CD4-positive, alpha-beta T cell (primary cell): ENCODE measurements at regions of chr2 and their contacts with region 1.

Region 1: GRCh38 chr2:230007931-230008707 is 60.6 kb downstream of the SLC16A14 start:
- DNase-seq: peak; percentile 67 to 86 (median 78)
- ATAC-seq: peak; percentile 72
- H3K4me3 ChIP-seq: no peak overlapping the region
- H3K4me3 Mint-ChIP-seq: peak overlapping the region; percentile 7
- H3K27ac ChIP-seq: no peak overlapping the region
- H3K27ac Mint-ChIP-seq: no peak overlapping the region
- H3K4me1 ChIP-seq: no peaks in the 10 kb centered on the region
- H3K4me1 Mint-ChIP-seq: no peaks in the 10 kb centered on the region
- H3K27me3 ChIP-seq: no peaks in the 10 kb centered on the region
- H3K27me3 Mint-ChIP-seq: no peaks in the 10 kb centered on the region
- CTCF ChIP-seq: peak; percentile 93

Region 2: DNA sequence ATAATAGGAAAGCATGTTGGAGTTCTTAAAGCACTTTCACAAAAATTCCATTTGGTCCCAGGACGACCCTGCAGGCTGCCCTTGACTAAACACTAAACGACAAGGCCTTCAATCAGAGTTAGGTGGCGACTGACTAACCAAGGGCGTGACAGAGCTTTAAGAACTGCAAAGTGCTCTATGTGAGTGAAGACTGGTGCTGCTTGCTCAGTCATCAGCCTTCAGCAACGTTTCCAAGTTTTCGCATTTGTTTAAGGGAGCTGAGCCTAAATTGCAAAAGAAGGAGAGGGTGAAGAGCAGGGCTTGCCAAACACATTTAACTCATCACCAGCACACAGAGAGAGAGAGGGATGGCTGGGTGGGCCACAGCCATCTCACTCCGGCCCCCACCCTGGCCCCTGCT is 532.3 kb before region 1 on chr2:
- CTCF ChIA-PET with region 1: no interaction called
- POLR2A ChIA-PET with region 1: no interaction called
- intact Hi-C with region 1: no loop called
- DNase-seq: no peak
- ATAC-seq: no peak
- H3K4me3 ChIP-seq: no peak overlapping the region
- H3K4me3 Mint-ChIP-seq: no peak overlapping the region
- H3K27ac ChIP-seq: no peak overlapping the region
- H3K27ac Mint-ChIP-seq: no peak overlapping the region
- H3K4me1 ChIP-seq: no peaks in the 10 kb centered on the region
- H3K4me1 Mint-ChIP-seq: no peaks in the 10 kb centered on the region
- H3K27me3 ChIP-seq: no peaks in the 10 kb centered on the region
- H3K27me3 Mint-ChIP-seq: peaks cover 9% of the 10 kb centered on the region
- CTCF ChIP-seq: no peak

Region 3: GRCh38 chr2:229943770-229944449 is 64.2 kb before region 1 on chr2:
- CTCF ChIA-PET with region 1: no interaction called
- POLR2A ChIA-PET with region 1: no interaction called
- intact Hi-C with region 1: no loop called
- DNase-seq: no peak
- ATAC-seq: no peak
- H3K4me3 ChIP-seq: no peak overlapping the region
- H3K4me3 Mint-ChIP-seq: no peak overlapping the region
- H3K27ac ChIP-seq: no peak overlapping the region
- H3K27ac Mint-ChIP-seq: no peak overlapping the region
- H3K4me1 ChIP-seq: no peaks in the 10 kb centered on the region
- H3K4me1 Mint-ChIP-seq: no peaks in the 10 kb centered on the region
- H3K27me3 ChIP-seq: no peaks in the 10 kb centered on the region
- H3K27me3 Mint-ChIP-seq: no peaks in the 10 kb centered on the region
- CTCF ChIP-seq: no peak

Region 4: DNA sequence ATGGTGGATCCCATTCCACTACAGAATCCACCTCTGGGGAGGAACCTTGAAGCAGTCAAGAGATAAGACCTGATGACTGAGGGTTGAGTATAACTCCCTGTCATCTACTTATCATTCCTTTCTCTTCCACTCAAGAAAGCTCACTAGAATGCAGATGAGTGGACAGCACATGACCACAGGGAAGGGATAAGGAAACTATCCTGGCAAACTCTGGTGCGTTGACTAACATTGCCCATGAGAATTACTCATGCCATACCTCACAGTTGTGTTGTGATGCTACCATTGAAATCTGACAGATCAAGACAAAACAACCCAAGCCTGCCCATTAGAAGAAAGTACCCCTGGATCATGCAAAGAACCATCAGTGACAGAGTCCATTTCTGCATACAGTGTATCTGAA is 34.1 kb after region 1 on chr2:
- CTCF ChIA-PET with region 1: no interaction called
- POLR2A ChIA-PET with region 1: no interaction called
- intact Hi-C with region 1: no loop called
- DNase-seq: no peak
- ATAC-seq: no peak
- H3K4me3 ChIP-seq: no peak overlapping the region
- H3K4me3 Mint-ChIP-seq: no peak overlapping the region
- H3K27ac ChIP-seq: no peak overlapping the region
- H3K27ac Mint-ChIP-seq: no peak overlapping the region
- H3K4me1 ChIP-seq: no peaks in the 10 kb centered on the region
- H3K4me1 Mint-ChIP-seq: no peaks in the 10 kb centered on the region
- H3K27me3 ChIP-seq: no peaks in the 10 kb centered on the region
- H3K27me3 Mint-ChIP-seq: no peaks in the 10 kb centered on the region
- CTCF ChIP-seq: no peak

Region 5: DNA sequence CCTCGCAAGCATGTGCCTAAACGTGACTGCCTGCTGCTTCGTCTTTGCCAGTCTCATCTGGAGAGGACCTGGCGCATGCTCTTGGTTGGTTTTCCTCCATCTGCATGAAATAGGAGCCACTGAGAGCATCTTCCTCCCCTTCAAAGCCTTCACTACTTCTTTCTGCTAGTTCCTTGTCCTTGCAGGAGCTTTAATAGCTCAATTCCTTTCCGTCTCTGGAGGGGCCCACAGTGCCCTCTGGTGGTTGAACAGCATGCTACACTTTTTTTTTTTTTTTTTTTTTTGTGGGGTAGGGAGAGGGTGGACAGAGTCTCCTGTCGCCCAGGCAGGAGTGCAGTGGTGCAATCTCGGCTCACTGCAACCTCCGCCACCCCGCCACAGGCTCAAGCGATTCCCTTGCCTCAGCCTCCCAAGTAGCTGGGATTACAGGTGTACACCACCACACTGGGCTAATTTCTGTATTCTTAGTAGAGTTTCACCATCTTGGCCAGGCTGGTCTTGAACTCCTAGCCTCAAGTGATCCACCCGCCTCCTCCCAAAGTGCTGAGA is 152.1 kb after region 1 on chr2:
- CTCF ChIA-PET with region 1: no interaction called
- POLR2A ChIA-PET with region 1: interaction called, 3 read pairs
- intact Hi-C with region 1: loop called (anchors 1 to 2 kb)
- DNase-seq: peak; percentile 21 to 73 (median 40)
- ATAC-seq: peak; percentile 48
- H3K4me3 ChIP-seq: no peak overlapping the region
- H3K4me3 Mint-ChIP-seq: no peak overlapping the region
- H3K27ac ChIP-seq: no peak overlapping the region
- H3K27ac Mint-ChIP-seq: no peak overlapping the region
- H3K4me1 ChIP-seq: peaks cover 4% of the 10 kb centered on the region
- H3K4me1 Mint-ChIP-seq: no peaks in the 10 kb centered on the region
- H3K27me3 ChIP-seq: no peaks in the 10 kb centered on the region
- H3K27me3 Mint-ChIP-seq: no peaks in the 10 kb centered on the region
- CTCF ChIP-seq: peak; percentile 93

Region 6: GRCh38 chr2:230814616-230815015 is 806.5 kb after region 1 on chr2:
- CTCF ChIA-PET with region 1: no interaction called
- POLR2A ChIA-PET with region 1: no interaction called
- intact Hi-C with region 1: loop called in 1 of 2 experiments (anchors 5 kb)
- DNase-seq: peak in 2 of 14 experiments; percentile 16 to 33
- ATAC-seq: peak; percentile 34
- H3K4me3 ChIP-seq: no peak overlapping the region
- H3K4me3 Mint-ChIP-seq: no peak overlapping the region
- H3K27ac ChIP-seq: no peak overlapping the region
- H3K27ac Mint-ChIP-seq: peak overlapping the region; percentile 71
- H3K4me1 ChIP-seq: no peaks in the 10 kb centered on the region
- H3K4me1 Mint-ChIP-seq: peaks cover 25% of the 10 kb centered on the region
- H3K27me3 ChIP-seq: no peaks in the 10 kb centered on the region
- H3K27me3 Mint-ChIP-seq: no peaks in the 10 kb centered on the region
- CTCF ChIP-seq: peak; percentile 27